Endothelial cell of umbilical vein (primary cell): ENCODE measurements at regions of chr5 and their contacts with region 1.

Region 1: GRCh38 chr5:158174918-158175851 is 316.2 kb upstream of the CLINT1 start:
- DNase-seq: peak; percentile 72
- H3K4me3 ChIP-seq: no peak overlapping the region
- H3K27ac ChIP-seq: no peak overlapping the region
- H3K4me1 ChIP-seq: no peaks in the 10 kb centered on the region
- H3K27me3 ChIP-seq: peaks cover 0 to 2% of the 10 kb centered on the region in 2 experiments
- CTCF ChIP-seq: peak; percentile 69 to 80
- POLR2A ChIP-seq: no peak

Region 2: DNA sequence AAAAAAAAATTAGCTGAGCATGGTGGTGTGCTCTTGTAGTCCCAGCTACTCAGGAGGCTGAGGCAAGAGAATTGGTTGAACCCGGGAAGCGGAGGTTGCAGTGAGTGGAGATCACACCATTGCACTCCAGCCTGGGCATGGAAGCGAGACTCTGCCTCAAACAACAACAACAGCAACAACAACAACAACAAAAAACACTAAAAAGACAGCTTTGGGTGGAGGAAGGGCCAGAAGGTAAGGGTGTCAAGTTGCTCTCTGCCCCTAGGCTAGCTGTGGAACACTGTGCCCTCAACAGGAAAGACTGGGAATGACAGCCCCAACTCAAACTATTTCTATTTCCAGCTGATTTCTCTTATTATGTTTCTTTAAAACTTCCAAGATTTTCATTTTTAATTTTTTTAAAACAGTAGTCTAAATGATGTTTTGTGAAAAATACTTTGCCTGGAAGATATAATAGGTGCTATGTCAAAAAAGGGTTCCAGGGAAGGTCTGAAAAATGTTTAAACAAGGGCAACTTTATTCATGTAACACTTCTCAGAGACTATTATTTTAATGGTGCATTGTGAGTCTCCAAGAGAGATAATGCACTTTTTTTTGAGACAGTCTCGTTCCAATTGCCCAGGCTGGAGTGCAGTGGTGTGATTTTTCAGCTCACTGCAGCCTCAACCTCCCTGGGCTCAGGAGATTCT is 346.1 kb before region 1 on chr5:
- CTCF ChIA-PET with region 1: no interaction called
- POLR2A ChIA-PET with region 1: no interaction called
- dilution Hi-C with region 1: no loop called
- intact Hi-C with region 1: loop called (anchors 5 kb)
- DNase-seq: peak; percentile 19
- H3K4me3 ChIP-seq: no peak overlapping the region
- H3K27ac ChIP-seq: no peak overlapping the region
- H3K4me1 ChIP-seq: peaks cover 27% of the 10 kb centered on the region
- H3K27me3 ChIP-seq: no peaks in the 10 kb centered on the region
- CTCF ChIP-seq: peak; percentile 13 to 36
- POLR2A ChIP-seq: no peak

Region 3: GRCh38 chr5:158163451-158164295 is 11.5 kb before region 1 on chr5:
- CTCF ChIA-PET with region 1: interaction called, 19 read pairs
- POLR2A ChIA-PET with region 1: no interaction called
- dilution Hi-C with region 1: no loop called
- intact Hi-C with region 1: no loop called
- DNase-seq: no peak
- H3K4me3 ChIP-seq: no peak overlapping the region
- H3K27ac ChIP-seq: no peak overlapping the region
- H3K4me1 ChIP-seq: peaks cover 2% of the 10 kb centered on the region
- H3K27me3 ChIP-seq: no peaks in the 10 kb centered on the region
- CTCF ChIP-seq: no peak
- POLR2A ChIP-seq: no peak

Region 4: GRCh38 chr5:158695595-158696330 is 520.6 kb after region 1 on chr5:
- CTCF ChIA-PET with region 1: interaction called, 107 read pairs
- POLR2A ChIA-PET with region 1: no interaction called
- dilution Hi-C with region 1: no loop called
- intact Hi-C with region 1: loop called (anchors 1 kb)
- DNase-seq: peak; percentile 75
- H3K4me3 ChIP-seq: no peak overlapping the region
- H3K27ac ChIP-seq: no peak overlapping the region
- H3K4me1 ChIP-seq: no peaks in the 10 kb centered on the region
- H3K27me3 ChIP-seq: no peaks in the 10 kb centered on the region
- CTCF ChIP-seq: peak; percentile 78 to 92
- POLR2A ChIP-seq: no peak

Region 5: DNA sequence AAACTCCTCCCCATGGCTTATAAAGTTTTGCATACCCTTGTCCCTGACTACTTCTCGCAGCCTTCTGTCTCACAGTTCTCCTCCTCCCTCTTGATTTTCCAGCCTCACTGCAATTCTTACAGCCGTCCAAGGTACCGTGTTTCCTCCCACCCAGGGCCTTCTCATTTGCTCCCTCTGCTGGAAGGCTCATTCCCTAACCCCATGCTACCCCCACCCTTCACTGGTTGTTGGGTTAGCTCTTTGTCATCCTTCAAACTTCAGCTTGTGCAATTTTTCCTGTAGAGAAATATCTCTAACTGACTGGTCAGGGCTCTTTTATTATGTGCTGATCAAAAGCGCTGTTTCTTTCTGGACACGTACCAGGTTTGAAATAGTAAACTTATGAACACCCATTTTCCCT is 595.3 kb after region 1 on chr5:
- CTCF ChIA-PET with region 1: interaction called, 7 read pairs
- POLR2A ChIA-PET with region 1: no interaction called
- dilution Hi-C with region 1: no loop called
- intact Hi-C with region 1: loop called (anchors 1 kb)
- DNase-seq: no peak
- H3K4me3 ChIP-seq: no peak overlapping the region
- H3K27ac ChIP-seq: no peak overlapping the region
- H3K4me1 ChIP-seq: no peaks in the 10 kb centered on the region
- H3K27me3 ChIP-seq: no peaks in the 10 kb centered on the region
- CTCF ChIP-seq: peak in 1 of 2 donors; percentile 6
- POLR2A ChIP-seq: no peak

Region 6: DNA sequence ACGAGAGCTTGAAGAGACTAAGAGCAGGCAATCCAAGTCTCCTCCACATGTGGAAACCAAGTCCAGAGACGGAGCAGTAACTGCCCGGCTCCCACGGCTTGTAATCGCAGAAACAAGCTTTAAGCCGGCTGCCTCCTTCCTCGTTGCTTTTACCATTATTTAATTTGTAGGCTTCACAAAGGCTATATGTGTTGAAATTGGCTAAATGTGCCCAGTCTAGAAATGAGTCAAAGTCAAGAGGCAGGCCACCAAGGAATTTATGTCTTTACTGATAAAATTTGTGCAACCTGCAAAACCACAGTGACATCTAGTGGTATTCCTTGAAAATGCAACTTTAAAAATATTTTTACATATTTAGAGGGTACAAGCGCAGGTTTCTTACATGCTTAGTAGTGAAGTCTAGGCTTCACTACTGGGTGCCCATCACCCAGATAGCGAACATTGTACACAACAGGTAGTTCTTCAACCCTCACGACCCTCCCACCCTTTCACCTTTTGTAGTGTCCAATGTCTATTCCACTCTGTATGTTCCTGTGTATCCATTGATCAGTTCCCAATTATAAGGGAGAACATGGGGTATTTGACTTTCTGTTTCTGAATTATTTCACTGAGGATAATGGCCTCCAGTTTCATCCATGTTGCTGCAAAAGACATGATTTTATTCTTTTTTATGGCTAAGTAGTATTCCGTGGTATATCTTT is 958.0 kb after region 1 on chr5:
- CTCF ChIA-PET with region 1: interaction called, 20 read pairs
- POLR2A ChIA-PET with region 1: no interaction called
- dilution Hi-C with region 1: no loop called
- intact Hi-C with region 1: loop called (anchors 1 kb)
- DNase-seq: peak; percentile 62
- H3K4me3 ChIP-seq: no peak overlapping the region
- H3K27ac ChIP-seq: no peak overlapping the region
- H3K4me1 ChIP-seq: no peaks in the 10 kb centered on the region
- H3K27me3 ChIP-seq: peaks cover 2 to 9% of the 10 kb centered on the region in 2 experiments
- CTCF ChIP-seq: peak; percentile 45 to 46
- POLR2A ChIP-seq: no peak